Transverse colon (tissue), 4 donors: ENCODE measurements at regions of chr4 and their contacts with region 1.

Region 1: GRCh38 chr4:81427344-81427821 is 44.3 kb downstream of the RASGEF1B start:
- DNase-seq: no peak
- H3K4me3 ChIP-seq: no peak overlapping the region
- H3K27ac ChIP-seq: no peak overlapping the region
- H3K4me1 ChIP-seq: peaks cover 0 to 8% (median 3%) of the 10 kb centered on the region in 4 donors
- H3K27me3 ChIP-seq: no peaks in the 10 kb centered on the region
- CTCF ChIP-seq: no peak
- EP300 ChIP-seq: no peak
- POLR2A ChIP-seq: no peak

Region 2: DNA sequence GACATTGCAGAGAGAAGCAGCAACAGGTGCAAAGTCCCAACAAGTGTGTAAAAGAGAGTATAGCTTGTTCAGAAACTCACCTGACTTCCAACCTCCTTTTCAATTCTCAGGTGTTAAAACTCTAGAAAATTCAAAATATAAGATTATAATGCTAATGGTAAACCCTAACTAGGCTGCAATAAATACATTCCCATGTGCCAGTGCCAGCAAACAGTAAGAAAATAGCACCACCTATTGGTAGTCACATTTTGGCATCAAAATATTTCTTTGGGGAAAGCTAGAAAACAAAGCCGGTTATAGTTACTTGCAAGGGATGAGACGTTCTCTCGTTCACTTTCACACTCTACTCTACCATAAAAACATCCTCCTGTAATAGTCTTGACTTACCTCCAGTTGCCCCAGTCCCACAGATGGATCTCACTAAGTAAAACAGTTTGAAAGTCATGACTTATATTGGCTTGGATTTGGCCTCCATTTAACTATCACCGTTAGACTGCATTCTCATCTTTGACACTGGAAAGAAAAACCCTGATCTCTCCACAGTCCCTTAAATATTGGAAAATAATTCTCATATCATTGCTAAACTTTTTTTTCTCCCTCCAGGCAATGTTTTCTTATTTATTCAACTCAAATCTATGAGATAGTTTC is 387.2 kb before region 1 on chr4:
- in situ Hi-C with region 1: no loop called
- intact Hi-C with region 1: no loop called
- DNase-seq: no peak
- H3K4me3 ChIP-seq: no peak overlapping the region
- H3K27ac ChIP-seq: peak overlapping the region in 3 of 4 donors; percentile 9 to 45 (median 37)
- H3K4me1 ChIP-seq: peaks cover 0 to 22% (median 2%) of the 10 kb centered on the region in 4 donors
- H3K27me3 ChIP-seq: no peaks in the 10 kb centered on the region
- CTCF ChIP-seq: peak; percentile 59 to 65 (median 64)
- EP300 ChIP-seq: no peak
- POLR2A ChIP-seq: no peak

Region 3: DNA sequence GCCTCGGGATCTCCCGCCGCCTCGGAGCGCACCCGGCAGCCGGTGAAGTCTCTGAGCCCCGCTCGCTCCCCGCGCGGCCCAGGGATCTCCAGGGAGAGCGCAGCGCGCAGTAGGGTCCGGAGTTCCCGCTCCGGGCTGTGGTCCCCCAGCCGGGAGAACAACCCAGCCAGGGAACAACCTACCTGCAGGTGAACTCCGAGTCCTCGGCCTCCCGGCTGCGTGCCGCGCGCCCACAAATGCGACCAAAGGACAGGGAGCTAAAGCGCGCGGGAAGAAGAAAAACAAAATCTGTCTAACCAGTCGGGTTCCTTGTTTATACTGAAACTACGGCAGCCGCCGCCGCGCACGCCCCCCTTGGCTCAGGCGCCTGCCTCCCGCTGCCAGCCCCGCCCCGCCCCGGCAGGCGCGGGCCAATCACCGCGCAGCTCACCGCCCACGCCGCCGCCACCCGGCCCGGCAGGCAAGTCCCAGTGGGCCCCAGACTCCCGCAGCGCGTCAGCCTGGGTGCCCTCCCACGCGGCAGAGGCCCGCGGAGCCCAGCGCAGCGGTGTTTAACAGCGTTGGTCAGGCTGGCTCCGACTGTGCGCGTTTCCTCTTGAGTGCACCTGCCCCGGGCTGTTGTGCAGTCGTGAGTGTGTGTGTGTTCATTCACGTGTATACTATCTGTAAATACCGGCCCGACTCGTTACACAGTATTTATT is 44.4 kb after region 1 on chr4 and contains the start of gene RASGEF1B:
- in situ Hi-C with region 1: no loop called
- intact Hi-C with region 1: no loop called
- DNase-seq: peak; percentile 94
- H3K4me3 ChIP-seq: peak within 1 kb of the TSS; percentile 75 to 93 (median 83)
- H3K27ac ChIP-seq: peak within 1 kb of the TSS; percentile 93 to 98 (median 97)
- H3K4me1 ChIP-seq: peaks cover 14 to 56% (median 39%) of the 10 kb centered on the region in 4 donors
- H3K27me3 ChIP-seq: no peaks in the 10 kb centered on the region
- CTCF ChIP-seq: no peak
- EP300 ChIP-seq: no peak
- POLR2A ChIP-seq: peak; percentile 91
- total RNA-seq, gene RASGEF1B: 14.1 to 31.0 (median 26.2) TPM

Region 4: DNA sequence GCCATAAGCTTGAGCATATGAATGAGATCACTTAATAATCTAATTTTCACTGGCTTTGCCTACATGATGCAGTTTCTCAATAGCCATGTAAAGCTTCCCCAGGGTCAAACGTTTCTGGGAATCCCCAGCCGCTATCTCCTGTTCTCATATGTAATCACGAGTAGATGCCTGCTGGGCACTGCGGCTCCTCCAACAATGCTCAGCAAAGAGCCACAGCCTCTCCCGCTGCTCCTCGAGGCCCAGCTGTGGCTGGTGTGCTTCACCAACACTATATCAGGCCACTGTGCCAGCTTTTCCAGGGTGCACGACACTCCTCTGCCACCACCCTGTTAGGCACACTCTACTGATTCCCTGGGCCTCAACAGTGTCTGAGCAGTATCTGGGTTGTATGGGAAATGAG is 122.6 kb after region 1 on chr4:
- in situ Hi-C with region 1: loop called in 1 of 4 experiments (anchors 25 kb)
- intact Hi-C with region 1: no loop called
- DNase-seq: no peak
- H3K4me3 ChIP-seq: no peak overlapping the region
- H3K27ac ChIP-seq: no peak overlapping the region
- H3K4me1 ChIP-seq: peaks cover 0 to 22% (median 0%) of the 10 kb centered on the region in 4 donors
- H3K27me3 ChIP-seq: no peaks in the 10 kb centered on the region
- CTCF ChIP-seq: no peak
- EP300 ChIP-seq: no peak
- POLR2A ChIP-seq: no peak

Region 5: DNA sequence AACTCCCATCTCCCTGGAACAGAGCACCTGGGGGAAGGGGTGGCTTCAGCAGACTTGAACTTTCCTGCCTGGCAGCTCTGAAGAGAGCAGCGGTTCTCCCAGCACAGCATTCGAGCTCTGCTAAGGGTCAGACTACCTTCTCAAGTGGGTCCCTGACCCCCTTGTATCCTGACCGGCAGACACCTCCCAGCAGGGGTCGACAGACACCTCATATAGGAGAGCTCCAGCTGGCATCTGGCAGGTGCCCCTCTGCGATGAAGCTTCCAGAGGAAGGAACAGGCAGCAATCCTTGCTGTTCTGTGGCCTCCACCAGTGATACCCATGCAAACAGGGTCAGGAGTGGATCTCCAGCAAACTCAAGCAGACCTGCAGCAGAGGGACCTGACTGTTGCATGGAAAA is 288.4 kb after region 1 on chr4:
- in situ Hi-C with region 1: no loop called
- intact Hi-C with region 1: no loop called
- DNase-seq: no peak
- H3K4me3 ChIP-seq: no peak overlapping the region
- H3K27ac ChIP-seq: no peak overlapping the region
- H3K4me1 ChIP-seq: no peaks in the 10 kb centered on the region
- H3K27me3 ChIP-seq: no peaks in the 10 kb centered on the region
- CTCF ChIP-seq: no peak
- EP300 ChIP-seq: no peak
- POLR2A ChIP-seq: no peak

Region 6: DNA sequence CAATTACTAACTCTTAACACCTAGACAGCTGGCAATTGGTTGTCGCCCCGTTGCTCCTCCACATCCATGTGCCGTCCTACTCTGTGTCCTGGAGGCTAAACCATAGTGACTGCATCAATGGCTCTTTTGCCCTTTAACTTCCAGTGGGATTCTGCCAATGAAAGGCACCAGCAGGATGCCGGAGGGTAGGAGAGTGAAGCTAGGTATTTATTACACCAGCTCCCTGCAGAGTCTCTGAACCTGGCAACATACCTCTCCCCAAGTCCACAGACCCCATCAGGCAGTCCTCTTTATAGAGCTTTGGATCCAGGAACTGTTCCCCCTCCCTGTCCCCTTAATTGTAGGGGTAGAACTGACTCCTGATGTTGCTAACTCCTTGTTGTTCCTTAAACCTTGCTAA is 519.6 kb after region 1 on chr4:
- in situ Hi-C with region 1: no loop called
- intact Hi-C with region 1: no loop called
- DNase-seq: no peak
- H3K4me3 ChIP-seq: no peak overlapping the region
- H3K27ac ChIP-seq: no peak overlapping the region
- H3K4me1 ChIP-seq: no peaks in the 10 kb centered on the region
- H3K27me3 ChIP-seq: peaks cover 6% of the 10 kb centered on the region
- CTCF ChIP-seq: no peak
- EP300 ChIP-seq: no peak
- POLR2A ChIP-seq: no peak